ENCODE measurements at regions of chr18 and their contacts with region 1.

Region 1: GRCh38 chr18:56869189-56869777 is 218.1 kb downstream of the WDR7 start:
- DNase-seq: peak; percentile 68
- ATAC-seq: peak; percentile 72
- H3K4me3 ChIP-seq: no peak overlapping the region
- H3K27ac ChIP-seq: no peak overlapping the region
- H3K4me1 ChIP-seq: no peaks in the 10 kb centered on the region
- H3K27me3 ChIP-seq: no peaks in the 10 kb centered on the region
- CTCF ChIP-seq: peak; percentile 85

Region 2: DNA sequence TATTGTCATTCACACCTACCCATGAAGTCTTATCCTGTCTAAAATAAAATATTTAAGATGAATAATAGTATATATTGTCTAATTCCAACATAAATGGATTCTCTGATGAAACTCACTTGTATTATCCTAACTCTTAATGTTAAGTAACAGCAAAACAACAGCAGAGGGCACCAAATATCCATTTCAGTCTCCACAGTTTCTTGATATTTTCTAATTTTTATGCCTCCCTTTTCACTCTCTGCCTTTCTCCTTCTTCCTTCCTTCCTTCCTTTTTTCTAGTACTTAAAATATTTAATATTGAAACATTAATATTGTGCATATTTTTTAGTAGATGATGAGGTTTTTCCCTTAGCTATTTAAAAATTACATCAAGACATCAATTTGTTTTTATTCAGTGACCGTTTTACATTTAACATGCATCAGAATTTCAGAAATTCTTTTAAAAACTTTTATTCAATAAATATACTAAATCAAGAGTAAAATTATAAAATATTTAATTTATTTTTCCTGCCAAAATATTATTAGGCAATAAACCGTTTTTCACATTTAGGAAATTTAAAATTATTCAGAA is 120.5 kb before region 1 on chr18:
- CTCF ChIA-PET with region 1: no interaction called
- POLR2A ChIA-PET with region 1: no interaction called
- intact Hi-C with region 1: loop called (anchors 2 kb)
- DNase-seq: peak; percentile 63
- ATAC-seq: no peak
- H3K4me3 ChIP-seq: no peak overlapping the region
- H3K27ac ChIP-seq: no peak overlapping the region
- H3K4me1 ChIP-seq: no peaks in the 10 kb centered on the region
- H3K27me3 ChIP-seq: no peaks in the 10 kb centered on the region
- CTCF ChIP-seq: peak; percentile 64

Region 3: DNA sequence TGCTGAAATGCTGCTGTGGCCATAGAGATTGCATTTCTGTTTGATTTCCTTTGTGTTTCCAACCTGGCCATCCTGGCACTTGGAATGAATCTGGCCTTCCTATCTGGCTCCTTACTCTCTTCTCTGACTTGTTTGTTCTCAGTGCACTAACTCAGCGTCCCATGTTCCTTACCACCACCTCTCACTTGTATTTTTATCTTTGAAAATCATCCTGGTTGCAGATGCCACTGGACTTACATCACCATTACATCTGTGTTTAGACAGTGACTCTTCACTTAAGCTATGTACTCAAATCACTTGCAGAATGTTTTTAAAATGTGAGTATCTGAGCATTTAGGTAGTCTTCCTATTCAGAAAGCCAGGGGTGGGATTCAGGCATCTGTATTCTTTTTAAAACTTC is 21.3 kb after region 1 on chr18:
- CTCF ChIA-PET with region 1: no interaction called
- POLR2A ChIA-PET with region 1: no interaction called
- intact Hi-C with region 1: loop called (anchors 1 kb)
- DNase-seq: peak; percentile 88
- ATAC-seq: peak; percentile 99
- H3K4me3 ChIP-seq: peak overlapping the region; percentile 18; the same call in 1 of the 2 replicates
- H3K27ac ChIP-seq: peak overlapping the region; percentile 5; the same call in 1 of the 2 replicates
- H3K4me1 ChIP-seq: peaks cover 36% of the 10 kb centered on the region
- H3K27me3 ChIP-seq: no peaks in the 10 kb centered on the region
- CTCF ChIP-seq: no peak

Region 4: DNA sequence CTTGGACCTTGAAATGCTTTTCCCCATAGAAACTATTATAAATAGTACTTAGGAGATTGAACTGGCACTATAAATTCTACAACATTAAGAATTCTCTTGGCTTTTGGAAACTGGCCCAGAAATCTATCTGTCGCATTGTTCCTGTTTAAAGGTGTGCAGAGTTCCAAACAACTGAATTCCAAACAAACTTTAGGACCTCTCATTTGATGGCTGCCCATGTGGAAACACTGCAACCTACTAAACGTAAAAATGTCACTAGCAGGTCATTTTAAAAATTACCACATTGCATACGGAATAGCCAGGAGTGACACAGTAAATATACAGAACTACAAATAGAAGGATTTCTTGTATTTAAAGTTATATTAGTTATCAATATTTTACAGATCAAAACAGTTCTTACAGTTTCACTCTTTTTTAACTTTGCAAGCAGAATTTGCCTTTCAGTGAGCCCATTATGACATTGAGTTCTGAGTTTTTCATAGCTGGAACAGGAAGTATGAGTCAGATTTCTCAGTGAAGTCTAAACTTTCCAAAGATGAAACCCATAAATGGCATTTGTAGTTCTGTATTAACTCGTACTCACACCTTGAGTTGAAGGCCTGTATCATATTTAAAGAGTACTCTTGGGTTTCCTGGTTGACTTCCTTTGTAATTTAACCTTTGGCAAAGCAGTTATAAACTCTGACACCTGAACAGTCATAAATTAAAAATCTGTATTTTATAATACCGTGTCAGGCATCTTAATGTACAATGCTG is 135.3 kb after region 1 on chr18:
- CTCF ChIA-PET with region 1: no interaction called
- POLR2A ChIA-PET with region 1: no interaction called
- intact Hi-C with region 1: loop called (anchors 10 kb)
- DNase-seq: peak; percentile 56
- ATAC-seq: peak; percentile 93
- H3K4me3 ChIP-seq: no peak overlapping the region
- H3K27ac ChIP-seq: no peak overlapping the region
- H3K4me1 ChIP-seq: peaks cover 8% of the 10 kb centered on the region
- H3K27me3 ChIP-seq: no peaks in the 10 kb centered on the region
- CTCF ChIP-seq: no peak

Region 5: DNA sequence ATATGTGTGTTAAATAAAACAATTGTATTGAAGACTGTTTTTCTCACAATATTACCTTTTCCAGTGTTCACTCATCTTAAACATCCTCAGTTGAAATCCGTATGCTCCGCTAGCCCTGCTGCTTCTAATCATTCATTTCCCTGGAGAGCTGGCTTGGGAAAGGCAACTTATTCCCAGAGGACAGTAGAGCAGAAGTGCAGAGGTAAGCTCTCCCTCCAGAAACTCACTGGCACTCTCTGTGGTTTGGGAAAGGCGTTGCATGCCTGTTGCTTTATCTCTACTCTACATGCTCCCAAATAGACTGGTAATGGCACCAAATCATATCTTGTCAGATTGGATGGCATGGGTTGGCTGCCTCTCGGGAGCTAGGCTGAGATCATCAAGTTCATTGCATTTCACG is 160.5 kb after region 1 on chr18:
- CTCF ChIA-PET with region 1: no interaction called
- POLR2A ChIA-PET with region 1: no interaction called
- intact Hi-C with region 1: loop called (anchors 1 kb)
- DNase-seq: peak; percentile 42
- ATAC-seq: peak; percentile 71
- H3K4me3 ChIP-seq: no peak overlapping the region
- H3K27ac ChIP-seq: no peak overlapping the region
- H3K4me1 ChIP-seq: no peaks in the 10 kb centered on the region
- H3K27me3 ChIP-seq: no peaks in the 10 kb centered on the region
- CTCF ChIP-seq: peak; percentile 43

Region 6: GRCh38 chr18:57434536-57435494 is 565.5 kb after region 1 on chr18 and contains the start of gene ONECUT2:
- CTCF ChIA-PET with region 1: interaction called, 4 read pairs
- POLR2A ChIA-PET with region 1: no interaction called
- intact Hi-C with region 1: loop called (anchors 1 kb)
- DNase-seq: peak; percentile 95
- ATAC-seq: peak; percentile 95
- H3K4me3 ChIP-seq: peak within 1 kb of the TSS; percentile 80
- H3K27ac ChIP-seq: no peak within 1 kb of the TSS
- H3K4me1 ChIP-seq: peaks cover 4% of the 10 kb centered on the region; the same call in 1 of the 2 replicates
- H3K27me3 ChIP-seq: peaks cover 57% of the 10 kb centered on the region
- CTCF ChIP-seq: no peak
- total RNA-seq, gene ONECUT2: 1.0 and 1.1 TPM in 2 replicates

Measured in PC-3 (cell line).